HepG2 (cell line): ENCODE measurements at regions of chr12 and their contacts with region 1.

Region 1: DNA sequence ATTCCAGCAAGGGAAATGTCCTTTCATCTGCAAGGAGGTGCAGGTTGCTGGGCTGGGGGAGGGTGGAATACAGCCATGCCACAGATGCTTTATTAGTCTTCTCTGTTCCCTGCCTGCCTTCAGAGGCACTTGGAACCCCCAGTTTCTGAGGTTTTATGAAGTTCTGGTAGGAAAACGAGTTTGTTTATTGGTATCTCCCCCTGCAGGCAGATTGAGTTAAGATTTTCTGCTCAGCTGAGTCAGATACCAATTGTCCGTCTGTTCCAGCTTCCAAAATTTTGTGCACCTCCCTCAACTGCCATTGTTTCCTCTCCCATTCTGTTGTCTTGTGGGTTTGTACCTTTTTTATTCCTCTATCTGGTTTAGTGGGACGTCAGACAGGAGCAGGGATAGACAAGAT is 155.6 kb downstream of the ETV6 start:
- DNase-seq: no peak
- ATAC-seq: no peak
- H3K4me3 ChIP-seq: no peak overlapping the region
- H3K27ac ChIP-seq: no peak overlapping the region
- H3K4me1 ChIP-seq: peaks cover 15% of the 10 kb centered on the region
- H3K27me3 ChIP-seq: no peaks in the 10 kb centered on the region
- CTCF ChIP-seq: no peak
- EP300 ChIP-seq: no peak
- POLR2A ChIP-seq: no peak
- RAD21 ChIP-seq: no peak

Region 2: DNA sequence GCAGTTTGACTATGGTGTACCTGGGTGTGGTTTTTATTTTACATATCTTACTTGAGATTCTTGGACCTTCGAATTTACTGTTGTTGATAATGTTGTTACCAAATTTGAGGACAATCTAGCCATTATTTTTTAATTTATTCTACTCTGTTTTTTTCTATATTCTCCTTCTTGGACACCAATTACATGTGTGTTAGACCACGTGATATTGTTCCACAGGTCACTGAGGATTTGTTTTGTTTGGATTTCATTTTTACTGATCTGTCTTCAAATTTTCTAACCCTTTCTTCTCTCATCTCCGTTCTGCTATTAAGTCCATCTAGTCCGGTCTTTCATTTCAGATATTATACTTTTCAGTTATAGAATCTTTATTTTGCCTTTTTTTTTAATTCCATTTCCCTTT is 60.8 kb after region 1 on chr12:
- CTCF ChIA-PET with region 1: no interaction called
- POLR2A ChIA-PET with region 1: no interaction called
- in situ Hi-C with region 1: no loop called
- intact Hi-C with region 1: loop called (anchors 2 kb)
- DNase-seq: no peak
- ATAC-seq: no peak
- H3K4me3 ChIP-seq: no peak overlapping the region
- H3K27ac ChIP-seq: no peak overlapping the region
- H3K4me1 ChIP-seq: peaks cover 31% of the 10 kb centered on the region
- H3K27me3 ChIP-seq: no peaks in the 10 kb centered on the region
- CTCF ChIP-seq: no peak
- EP300 ChIP-seq: no peak
- POLR2A ChIP-seq: no peak
- RAD21 ChIP-seq: no peak